Aorta (tissue), 5 donors: ENCODE measurements at regions of chr5 and their contacts with region 1.

Region 1: DNA sequence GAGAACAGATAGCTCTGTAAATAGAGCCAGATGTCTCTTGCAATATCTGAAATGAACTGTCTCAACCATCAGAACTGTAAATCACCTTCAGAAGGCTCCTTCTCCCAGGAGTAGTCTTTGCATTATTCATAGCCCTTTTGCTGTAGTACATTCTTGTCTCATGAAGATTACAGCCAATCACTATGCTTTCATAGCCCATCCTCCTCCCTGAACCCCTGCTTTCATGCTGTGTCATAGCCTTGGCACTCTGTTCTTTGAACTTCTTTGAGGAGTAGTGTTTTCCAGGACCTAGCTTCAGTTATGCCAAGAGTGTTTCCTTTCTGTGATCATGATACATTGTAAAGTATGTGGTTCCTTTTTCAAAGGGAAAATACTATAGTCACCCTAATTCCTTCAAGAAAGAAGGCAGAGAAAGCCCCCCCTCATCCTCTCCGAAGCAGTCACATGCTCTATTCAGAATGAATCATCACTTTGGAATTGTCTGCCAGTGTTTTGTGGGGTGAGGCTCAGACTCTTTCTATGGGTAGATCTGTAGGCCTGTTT is 61.1 kb downstream of the GRIA1 start:
- DNase-seq: no peak
- ATAC-seq: peak; percentile 81
- H3K4me3 ChIP-seq: no peak overlapping the region
- H3K27ac ChIP-seq: peak overlapping the region in 1 of 2 donors; percentile 64
- H3K4me1 ChIP-seq: peaks cover 3 to 7% of the 10 kb centered on the region in 2 donors
- H3K27me3 ChIP-seq: no peaks in the 10 kb centered on the region

Region 2: DNA sequence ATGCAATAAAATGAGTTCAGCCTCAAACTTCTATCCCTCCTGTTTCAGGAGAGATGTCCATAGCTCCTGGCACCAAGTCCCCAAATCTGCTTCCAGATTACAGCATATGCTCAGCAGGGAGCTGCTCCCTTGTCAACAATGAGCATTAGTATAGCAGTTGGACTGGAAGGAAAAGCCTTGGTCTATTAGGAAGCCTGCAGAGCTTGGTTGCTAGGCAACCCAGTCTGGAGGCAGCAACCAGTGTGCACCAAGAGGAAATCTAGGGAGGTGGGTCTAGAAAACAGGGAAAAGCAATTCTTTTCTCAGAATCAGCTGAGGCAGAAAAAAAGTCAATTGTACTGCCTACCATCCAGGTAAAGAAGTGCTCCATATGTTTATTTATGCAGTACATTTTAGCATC is 917.0 kb before region 1 on chr5:
- intact Hi-C with region 1: loop called in 1 of 2 experiments (anchors 10 kb)
- DNase-seq: peak in 1 of 2 donors; percentile 45
- ATAC-seq: peak; percentile 36
- H3K4me3 ChIP-seq: no peak overlapping the region
- H3K27ac ChIP-seq: peak overlapping the region; percentile 86 to 87
- H3K4me1 ChIP-seq: peaks cover 6 to 18% of the 10 kb centered on the region in 2 donors
- H3K27me3 ChIP-seq: no peaks in the 10 kb centered on the region

Region 3: DNA sequence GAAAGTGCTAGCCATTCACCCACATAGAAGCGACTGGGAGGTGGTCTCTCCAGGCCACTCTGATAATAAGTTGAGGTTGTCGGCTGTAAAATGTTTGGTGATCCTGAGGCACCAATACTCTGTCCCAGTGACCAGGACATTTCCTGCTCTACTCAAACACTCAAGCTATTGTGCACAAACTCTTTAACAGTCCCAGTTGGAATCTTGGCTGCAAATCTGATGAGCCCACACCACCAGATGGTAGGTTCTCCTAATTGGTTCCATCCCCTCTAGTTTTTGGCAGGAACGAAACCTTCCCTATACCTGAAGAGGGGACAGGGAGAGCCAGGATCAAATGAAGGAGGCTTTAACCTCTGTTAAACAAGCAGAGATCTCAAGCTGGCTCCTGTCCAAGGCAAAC is 46.9 kb before region 1 on chr5:
- intact Hi-C with region 1: loop called in 1 of 2 experiments (anchors 10 kb)
- DNase-seq: no peak
- ATAC-seq: no peak
- H3K4me3 ChIP-seq: no peak overlapping the region
- H3K27ac ChIP-seq: no peak overlapping the region
- H3K4me1 ChIP-seq: peaks cover 0 to 6% of the 10 kb centered on the region in 2 donors
- H3K27me3 ChIP-seq: no peaks in the 10 kb centered on the region